PC-9 (cell line): ENCODE measurements at regions of chr16 and their contacts with region 1.

Region 1: GRCh38 chr16:3158471-3159314 is 23.9 kb downstream of the ZNF213 start:
- DNase-seq: peak; percentile 82 to 95
- H3K4me3 ChIP-seq: peak overlapping the region; percentile 71
- H3K27ac ChIP-seq: peak overlapping the region; percentile 98
- H3K4me1 ChIP-seq: no peaks in the 10 kb centered on the region
- H3K27me3 ChIP-seq: no peaks in the 10 kb centered on the region
- CTCF ChIP-seq: no peak

Region 2: GRCh38 chr16:3045357-3045728 is 113.3 kb before region 1 on chr16:
- CTCF ChIA-PET with region 1: interaction called, 3 read pairs
- POLR2A ChIA-PET with region 1: interaction called, 28 read pairs
- intact Hi-C with region 1: no loop called
- DNase-seq: no peak
- H3K4me3 ChIP-seq: peak overlapping the region; percentile 92; the same call in 1 of the 2 replicates
- H3K27ac ChIP-seq: no peak overlapping the region
- H3K4me1 ChIP-seq: peaks cover 8% of the 10 kb centered on the region; the same call in 1 of the 2 replicates
- H3K27me3 ChIP-seq: no peaks in the 10 kb centered on the region
- CTCF ChIP-seq: no peak

Region 3: GRCh38 chr16:3173892-3174617 is 15.4 kb after region 1 on chr16:
- CTCF ChIA-PET with region 1: interaction called, 12 read pairs
- POLR2A ChIA-PET with region 1: interaction called, 12 read pairs
- intact Hi-C with region 1: no loop called
- DNase-seq: no peak
- H3K4me3 ChIP-seq: peak overlapping the region; percentile 43; the same call in 1 of the 2 replicates
- H3K27ac ChIP-seq: no peak overlapping the region
- H3K4me1 ChIP-seq: peaks cover 7% of the 10 kb centered on the region
- H3K27me3 ChIP-seq: no peaks in the 10 kb centered on the region
- CTCF ChIP-seq: peak; percentile 68